Endothelial cell of umbilical vein (primary cell): ENCODE measurements at regions of chr12 and their contacts with region 1.

Region 1: DNA sequence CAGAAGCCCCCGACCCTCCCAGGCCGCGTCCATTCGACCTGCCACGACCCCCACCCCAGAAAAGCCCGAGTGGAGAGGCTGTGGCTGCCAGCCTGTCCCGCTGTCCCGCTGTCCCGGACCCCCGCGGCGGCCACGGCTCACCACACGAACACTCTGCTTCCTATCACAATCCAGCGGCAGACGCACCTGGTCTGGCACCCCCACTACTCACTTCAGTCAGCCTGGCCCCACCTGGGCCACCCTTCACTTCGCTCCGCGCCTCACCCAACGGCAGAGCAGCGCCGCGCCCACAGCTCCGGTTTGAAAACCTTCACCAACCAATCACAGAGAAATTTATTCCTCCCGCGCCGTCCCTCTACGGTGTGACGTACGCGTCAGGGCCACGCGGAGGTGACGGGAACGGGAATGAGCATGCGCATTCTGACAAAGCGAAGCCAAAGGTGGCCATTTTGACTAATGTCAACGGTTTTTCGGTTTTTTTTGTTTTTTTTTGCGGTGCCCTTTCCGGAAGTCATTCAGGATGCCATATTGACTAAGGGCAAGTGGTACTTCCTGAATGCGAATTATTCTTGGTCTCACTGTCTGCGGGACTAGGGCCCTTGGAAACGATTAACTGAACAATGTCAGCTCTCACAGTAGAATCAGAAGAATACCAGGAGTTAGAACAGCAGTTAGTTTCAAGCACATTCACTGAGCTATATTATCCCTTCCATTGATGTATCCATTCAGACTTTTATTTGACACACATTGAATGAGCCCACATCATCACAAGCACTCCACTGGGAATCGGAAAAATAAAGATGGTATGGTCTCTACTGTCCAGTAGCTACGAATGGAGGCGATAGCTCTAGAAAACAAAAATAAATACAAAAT is at the start of gene RACGAP1:
- DNase-seq: peak; percentile 99
- H3K4me3 ChIP-seq: peak within 1 kb of the TSS; percentile 40 to 98 (median 64)
- H3K27ac ChIP-seq: peak within 1 kb of the TSS; percentile 16
- H3K4me1 ChIP-seq: peaks cover 10% of the 10 kb centered on the region
- H3K27me3 ChIP-seq: peaks cover 14 to 17% of the 10 kb centered on the region in 2 experiments
- CTCF ChIP-seq: no peak
- POLR2A ChIP-seq: peak; percentile 31
- total RNA-seq, gene RACGAP1: 56.3 and 62.9 TPM in 2 replicates

Region 2: GRCh38 chr12:50043854-50044253 is 18.4 kb after region 1 on chr12:
- CTCF ChIA-PET with region 1: interaction called, 27 read pairs
- POLR2A ChIA-PET with region 1: no interaction called
- dilution Hi-C with region 1: no loop called
- intact Hi-C with region 1: no loop called
- DNase-seq: no peak
- H3K4me3 ChIP-seq: no peak overlapping the region
- H3K27ac ChIP-seq: no peak overlapping the region
- H3K4me1 ChIP-seq: no peaks in the 10 kb centered on the region
- H3K27me3 ChIP-seq: peaks cover 7 to 10% of the 10 kb centered on the region in 2 experiments
- CTCF ChIP-seq: no peak
- POLR2A ChIP-seq: no peak